ENCODE measurements at regions of chr22 and their contacts with region 1.

Region 1: DNA sequence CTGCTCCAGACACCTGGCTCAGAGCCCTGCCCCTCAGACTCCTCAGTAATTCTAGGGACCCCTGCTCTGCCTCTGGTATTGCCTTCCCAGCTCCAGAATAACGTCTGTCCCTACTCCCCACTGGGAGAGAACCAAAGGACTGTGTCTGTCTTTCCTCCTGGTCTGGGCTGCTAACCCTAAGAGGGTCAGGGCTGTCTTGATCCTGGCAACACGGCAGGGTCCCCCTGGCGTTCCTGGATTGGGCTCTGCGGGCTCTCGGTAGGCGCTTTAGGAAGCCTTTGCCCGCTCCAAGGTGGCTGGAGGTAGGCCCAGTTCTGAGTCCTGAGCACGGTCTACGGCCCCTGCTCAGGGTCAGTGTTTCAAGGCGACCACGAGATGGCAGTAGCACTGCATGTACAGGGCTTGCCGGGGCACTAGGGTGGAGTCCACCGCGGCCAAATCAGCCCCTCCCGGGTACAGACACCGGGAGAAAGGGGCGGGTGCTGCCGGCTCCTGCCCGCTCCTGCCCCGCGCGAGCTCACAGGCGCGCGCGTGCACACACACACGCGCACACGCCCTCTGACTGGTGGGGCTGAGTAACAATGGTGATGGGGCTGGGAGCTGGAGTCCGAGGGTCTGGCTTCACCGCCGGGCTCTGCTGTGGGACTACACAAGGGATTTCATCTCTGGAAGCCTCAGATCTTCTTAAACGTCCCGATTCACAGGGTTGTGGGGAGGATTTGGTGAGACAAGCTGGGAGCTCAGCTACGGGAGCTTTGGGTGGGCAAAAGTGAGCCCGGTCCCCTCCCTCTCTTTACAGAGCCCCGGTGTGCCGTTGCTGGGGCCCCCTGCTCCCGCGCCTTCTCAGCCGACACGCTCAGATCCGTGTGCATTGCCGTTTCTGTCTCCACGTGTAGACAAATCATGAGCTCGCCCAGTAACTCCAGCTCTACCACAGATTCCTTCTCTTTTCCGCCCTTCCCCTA is 30.1 kb upstream of the HMOX1 start:
- DNase-seq: peak; percentile 97

Region 2: DNA sequence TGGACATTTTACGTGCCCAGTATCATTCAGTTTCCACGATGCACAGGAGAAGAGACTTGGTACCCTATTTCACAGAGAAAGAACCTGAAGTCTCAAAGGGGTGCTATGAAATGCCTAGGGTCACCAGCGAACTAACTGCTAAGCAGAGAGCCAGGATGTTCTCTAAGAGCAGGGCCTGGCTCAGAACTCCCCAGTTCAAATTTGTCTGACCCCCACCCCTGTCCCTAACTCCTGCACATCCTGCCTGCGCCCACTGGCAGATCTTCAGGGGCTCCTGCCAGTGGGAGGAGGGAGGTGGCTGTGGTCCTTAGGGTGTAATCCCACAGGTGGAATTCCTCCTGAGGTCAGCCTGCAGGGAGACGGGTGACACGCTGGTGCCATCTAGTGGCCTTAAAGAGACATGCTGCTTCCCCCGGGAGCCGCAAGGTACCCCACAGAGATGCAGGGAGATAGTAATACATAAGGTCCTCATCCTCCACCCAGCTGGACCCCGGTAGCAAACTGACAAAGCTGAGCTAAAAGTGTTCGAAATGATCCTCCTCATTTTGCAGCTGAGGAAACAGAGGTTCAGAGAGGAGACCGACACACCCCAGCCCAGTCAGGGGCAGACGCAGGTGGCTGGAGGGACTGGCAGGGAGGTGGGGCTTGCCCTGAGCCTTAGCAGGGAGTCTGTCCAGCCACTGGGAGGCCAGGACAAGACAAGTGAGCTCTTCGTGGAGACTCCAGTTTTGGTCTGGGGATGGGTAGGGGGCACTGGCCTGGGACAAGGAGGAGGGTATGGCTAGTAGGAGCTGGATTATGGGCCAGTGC is 232.2 kb after region 1 on chr22:
- intact Hi-C with region 1: loop called in 1 of 2 experiments (anchors 10 kb)
- DNase-seq: no peak